Activated T-helper 1 cell treated with anti-CD3 and anti-CD28 coated beads, Interleukin-12 subunit alpha, Interleukin-12 subunit beta, Interleukin-2, Interleukin-4 antibody, amounts not matched to agents 30 ng/mL and 10 ng/mL and 1 ng/mL, durations not matched to agents 14 hours and 24 hours and 36 hours (primary cell): ENCODE measurements at regions of chr4 and their contacts with region 1.

Region 1: DNA sequence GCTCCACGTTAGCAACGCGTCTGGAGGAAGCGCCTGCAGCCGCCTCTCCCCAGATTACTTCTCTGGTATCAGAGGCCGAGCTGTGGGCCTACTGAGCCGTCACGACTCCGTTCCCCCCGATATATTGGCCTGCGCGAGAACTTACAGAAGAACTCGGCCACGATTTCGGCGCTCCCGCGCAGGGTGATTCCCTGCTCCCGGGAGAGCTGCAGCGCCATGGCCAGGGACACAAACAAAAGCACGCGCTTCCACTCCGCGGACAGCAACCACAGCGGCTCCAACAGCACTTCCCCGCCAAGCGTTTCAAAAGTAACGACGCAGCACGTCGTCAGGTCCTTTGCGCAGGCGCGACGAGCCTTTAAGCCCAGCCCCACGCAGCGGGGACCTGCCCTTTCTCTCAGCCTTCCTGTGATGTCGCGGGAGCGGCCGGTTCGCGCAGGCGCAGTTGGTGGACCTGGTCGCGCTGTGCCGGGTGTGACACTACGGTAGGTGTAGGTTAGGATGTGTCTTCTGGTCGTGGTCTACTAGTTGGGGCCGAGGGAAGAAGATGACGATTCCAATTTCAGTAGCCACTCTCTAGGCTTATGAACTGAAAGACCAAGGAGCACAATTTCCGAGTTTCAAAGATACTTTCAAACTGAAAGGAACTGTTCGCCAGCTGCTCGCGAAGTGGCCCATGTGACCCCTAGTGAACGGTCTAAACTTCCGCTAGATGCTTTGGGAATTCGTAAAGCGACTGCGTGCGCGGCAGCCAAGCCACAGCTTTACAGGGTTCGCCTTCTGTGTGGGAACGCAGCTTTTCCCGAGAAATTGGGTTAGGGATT is at the start of gene MAD2L1:
- DNase-seq: peak; percentile 98
- H3K4me3 Mint-ChIP-seq: peak within 1 kb of the TSS; percentile 99
- H3K27ac Mint-ChIP-seq: peak within 1 kb of the TSS; percentile 100
- H3K4me1 Mint-ChIP-seq: peaks cover 83% of the 10 kb centered on the region
- H3K27me3 Mint-ChIP-seq: peaks cover 4% of the 10 kb centered on the region
- total RNA-seq, gene MAD2L1: 63.3 and 69.0 TPM in 2 replicates

Region 2: GRCh38 chr4:119597377-119597776 is 469.4 kb before region 1 on chr4:
- intact Hi-C with region 1: no loop called
- DNase-seq: no peak
- H3K4me3 Mint-ChIP-seq: no peak overlapping the region
- H3K27ac Mint-ChIP-seq: no peak overlapping the region
- H3K4me1 Mint-ChIP-seq: no peaks in the 10 kb centered on the region
- H3K27me3 Mint-ChIP-seq: peaks cover 6% of the 10 kb centered on the region

Region 3: GRCh38 chr4:121096629-121097028 is 1029.9 kb after region 1 on chr4:
- intact Hi-C with region 1: loop called (anchors 1 kb)
- DNase-seq: no peak
- H3K4me3 Mint-ChIP-seq: no peak overlapping the region
- H3K27ac Mint-ChIP-seq: no peak overlapping the region
- H3K4me1 Mint-ChIP-seq: no peaks in the 10 kb centered on the region
- H3K27me3 Mint-ChIP-seq: peaks cover 21% of the 10 kb centered on the region